Activated CD8-positive, alpha-beta T cell treated with anti-CD3 and anti-CD28 coated beads, Interleukin-2, amount 10 ng/mL, durations not matched to agents 7 days and 5 days (primary cell): ENCODE measurements at regions of chr6 and their contacts with region 1.

Region 1: GRCh38 chr6:33585403-33586107 is 5.5 kb upstream of the BAK1 start:
- DNase-seq: peak; percentile 93
- ATAC-seq: peak; percentile 92
- H3K4me3 Mint-ChIP-seq: peak overlapping the region; percentile 78
- H3K27ac Mint-ChIP-seq: peak overlapping the region; percentile 96
- H3K4me1 Mint-ChIP-seq: peaks cover 33% of the 10 kb centered on the region
- H3K27me3 Mint-ChIP-seq: no peaks in the 10 kb centered on the region

Region 2: GRCh38 chr6:33018904-33019303 is 566.7 kb before region 1 on chr6:
- CTCF ChIA-PET with region 1: no interaction called
- POLR2A ChIA-PET with region 1: no interaction called
- DNase-seq: peak; percentile 70
- ATAC-seq: peak; percentile 93
- H3K4me3 Mint-ChIP-seq: peak overlapping the region; percentile 72
- H3K27ac Mint-ChIP-seq: peak overlapping the region; percentile 81
- H3K4me1 Mint-ChIP-seq: peaks cover 33% of the 10 kb centered on the region
- H3K27me3 Mint-ChIP-seq: no peaks in the 10 kb centered on the region

Region 3: GRCh38 chr6:33607784-33608161 is 22.2 kb after region 1 on chr6:
- CTCF ChIA-PET with region 1: interaction called, 27 read pairs
- POLR2A ChIA-PET with region 1: no interaction called
- DNase-seq: peak; percentile 63
- ATAC-seq: peak; percentile 77
- H3K4me3 Mint-ChIP-seq: no peak overlapping the region
- H3K27ac Mint-ChIP-seq: no peak overlapping the region
- H3K4me1 Mint-ChIP-seq: peaks cover 2% of the 10 kb centered on the region
- H3K27me3 Mint-ChIP-seq: peaks cover 17% of the 10 kb centered on the region

Region 4: DNA sequence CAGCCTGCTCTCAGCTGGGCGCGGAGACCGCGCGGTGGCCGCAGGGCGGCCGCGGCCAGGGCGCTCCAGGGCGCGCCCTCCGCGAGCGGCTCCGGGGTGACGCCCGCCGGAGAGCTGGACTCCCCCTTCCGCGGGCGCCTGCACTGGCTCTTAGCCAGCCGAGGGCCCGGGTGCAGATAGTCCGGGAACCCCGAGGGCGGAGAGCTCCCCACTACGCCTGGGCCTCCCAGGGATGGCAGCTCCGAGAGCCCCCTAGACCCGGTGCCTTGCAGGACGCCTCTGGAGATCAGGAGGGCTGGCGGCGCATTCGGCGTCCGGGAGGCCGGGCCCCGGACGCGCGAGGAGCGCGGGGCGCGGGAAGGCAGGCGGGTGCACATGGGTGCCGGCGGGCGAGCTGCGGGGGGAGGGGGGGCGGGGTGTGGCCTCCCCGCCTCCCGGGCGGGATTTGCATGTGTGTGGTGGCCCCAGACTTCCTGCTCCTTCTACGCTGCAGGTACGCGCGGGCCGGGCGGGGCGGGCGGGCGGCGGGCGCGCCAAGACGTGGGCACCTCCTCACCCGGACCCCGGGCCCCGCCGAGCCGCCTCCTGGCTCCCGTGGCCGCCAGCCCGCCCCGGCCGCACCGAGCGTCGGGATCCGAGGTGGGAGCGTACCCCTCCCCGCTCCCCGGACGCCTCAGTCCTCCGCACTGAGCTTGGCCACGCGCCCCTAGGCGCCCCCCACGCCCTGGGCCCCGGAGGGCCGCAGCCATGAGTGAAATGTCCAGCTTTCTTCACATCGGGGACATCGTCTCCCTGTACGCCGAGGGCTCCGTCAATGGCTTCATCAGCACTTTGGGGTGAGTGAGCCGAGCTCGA is 35.5 kb after region 1 on chr6 and contains the start of gene ITPR3:
- CTCF ChIA-PET with region 1: interaction called, 22 read pairs
- POLR2A ChIA-PET with region 1: no interaction called
- DNase-seq: peak; percentile 85
- ATAC-seq: peak; percentile 82
- H3K4me3 Mint-ChIP-seq: peak within 1 kb of the TSS; percentile 96
- H3K27ac Mint-ChIP-seq: peak within 1 kb of the TSS; percentile 95
- H3K4me1 Mint-ChIP-seq: peaks cover 60% of the 10 kb centered on the region
- H3K27me3 Mint-ChIP-seq: no peaks in the 10 kb centered on the region
- total RNA-seq, gene ITPR3: 57.8 to 59.3 TPM

Region 5: DNA sequence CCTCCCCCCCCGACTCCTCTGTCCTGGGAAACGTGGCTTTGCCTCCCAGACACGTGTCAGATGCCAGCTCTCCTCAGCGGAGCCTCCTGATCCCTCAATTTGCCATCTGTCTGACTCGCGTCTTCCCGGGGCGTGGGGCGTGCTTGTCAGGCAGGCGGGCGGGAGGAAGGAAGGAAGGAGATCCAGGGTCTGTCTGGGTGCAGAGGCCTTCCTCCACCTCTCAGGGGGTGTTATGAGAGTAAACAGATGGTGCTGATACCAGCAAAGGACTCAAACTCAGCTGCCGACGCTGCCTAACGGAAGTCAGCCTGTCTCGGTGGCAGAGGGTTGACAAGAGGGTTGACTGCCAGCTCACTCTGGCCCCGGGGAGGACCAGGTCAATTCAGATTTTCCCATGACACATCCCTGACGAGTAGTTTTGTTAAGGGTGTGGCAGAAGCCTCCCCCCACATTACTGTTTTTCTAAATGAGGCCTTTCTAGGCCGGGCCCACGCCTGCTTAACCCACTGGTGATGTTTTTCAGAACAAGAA is 108.9 kb after region 1 on chr6:
- CTCF ChIA-PET with region 1: interaction called, 19 read pairs
- POLR2A ChIA-PET with region 1: no interaction called
- DNase-seq: peak; percentile 70
- ATAC-seq: peak; percentile 64
- H3K4me3 Mint-ChIP-seq: peak overlapping the region; percentile 49
- H3K27ac Mint-ChIP-seq: peak overlapping the region; percentile 92
- H3K4me1 Mint-ChIP-seq: peaks cover 84% of the 10 kb centered on the region
- H3K27me3 Mint-ChIP-seq: no peaks in the 10 kb centered on the region

Region 6: DNA sequence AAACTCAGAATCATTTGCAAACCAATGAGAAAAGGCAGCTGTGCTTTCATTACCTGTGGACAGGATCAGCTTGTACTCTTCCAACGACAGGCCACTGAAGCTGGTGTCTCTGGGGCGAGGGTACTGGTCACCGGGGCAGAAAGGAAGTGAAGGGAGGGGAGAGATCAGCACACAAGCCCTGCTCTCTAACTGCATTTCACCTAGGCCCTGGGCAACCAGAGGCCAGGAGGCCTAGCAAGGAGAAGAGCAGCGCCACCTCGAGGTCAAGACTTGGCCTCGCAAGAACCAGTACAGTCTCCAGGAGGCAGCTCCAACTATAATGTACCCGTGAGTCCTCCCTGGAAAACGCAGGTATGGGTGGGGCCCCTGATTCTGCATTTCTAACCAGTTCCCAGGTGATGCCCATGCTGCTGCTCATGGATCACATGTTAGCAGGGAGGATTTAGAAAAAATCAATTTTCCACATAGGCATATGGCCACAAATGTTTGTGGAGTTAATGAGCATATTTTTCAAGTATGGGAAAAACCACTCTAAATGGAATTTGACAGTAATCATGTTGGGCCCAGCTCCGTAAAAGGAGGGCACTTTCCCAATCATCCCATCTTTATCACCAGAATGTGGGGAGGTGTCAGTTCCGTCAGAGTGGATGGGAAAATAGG is 115.0 kb after region 1 on chr6:
- CTCF ChIA-PET with region 1: interaction called, 44 read pairs
- POLR2A ChIA-PET with region 1: interaction called, 5 read pairs
- DNase-seq: peak; percentile 87
- ATAC-seq: peak; percentile 76
- H3K4me3 Mint-ChIP-seq: no peak overlapping the region
- H3K27ac Mint-ChIP-seq: peak overlapping the region; percentile 40
- H3K4me1 Mint-ChIP-seq: peaks cover 49% of the 10 kb centered on the region
- H3K27me3 Mint-ChIP-seq: no peaks in the 10 kb centered on the region